ENCODE measurements at regions of chr5 and their contacts with region 1.

Region 1: DNA sequence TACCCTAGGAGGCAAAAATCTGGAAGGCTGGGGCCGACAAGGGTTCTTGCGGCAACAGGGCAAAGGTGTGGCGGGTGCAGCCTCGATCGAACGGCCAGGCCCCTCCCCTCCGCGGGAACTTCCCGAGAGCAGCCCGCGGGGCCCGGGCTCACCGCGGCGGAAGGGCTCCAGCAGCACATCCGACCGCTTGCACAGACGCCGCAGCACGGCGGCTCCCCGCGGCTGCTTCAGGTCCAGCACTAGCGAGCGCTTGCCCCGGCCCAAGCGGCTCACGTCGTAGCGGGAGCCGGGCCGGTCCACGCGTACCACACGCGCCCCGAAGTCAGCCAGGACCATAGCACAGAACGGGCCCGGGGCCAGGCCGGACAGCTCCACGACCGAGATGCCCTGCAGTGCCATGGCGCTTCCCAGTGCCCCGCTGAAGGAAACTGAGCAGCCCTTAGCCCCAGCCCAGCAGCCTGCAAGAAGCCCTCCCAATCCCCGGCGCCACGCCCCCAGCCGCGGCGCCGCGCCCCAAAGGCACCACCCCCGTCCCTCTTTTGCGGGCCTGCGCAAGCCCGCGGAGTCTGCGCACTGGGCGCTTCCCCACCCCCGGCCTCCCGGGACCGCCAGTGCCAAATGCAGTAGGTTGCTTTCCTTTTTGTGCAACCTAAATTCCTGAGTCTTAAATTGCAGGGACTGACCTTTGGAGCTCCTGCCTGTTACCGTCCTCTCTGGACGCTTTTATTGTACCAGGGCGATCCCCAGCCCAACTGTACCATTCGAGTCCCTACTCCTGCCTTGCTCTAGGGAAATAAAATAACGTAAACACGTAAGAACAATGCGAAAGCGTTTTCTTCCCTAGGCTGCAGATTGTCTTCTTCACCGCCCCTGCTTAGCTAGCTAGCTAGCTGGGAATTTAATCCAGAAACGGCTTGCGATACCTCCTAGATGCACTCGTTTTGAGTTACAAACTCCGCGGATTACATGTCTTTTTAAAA is at the start of gene AMACR:
- DNase-seq: peak; percentile 87 to 93
- ATAC-seq: peak; percentile 96 to 97
- H3K4me3 ChIP-seq: peak within 1 kb of the TSS; percentile 58 to 82 (median 67)
- H3K27ac ChIP-seq: peak within 1 kb of the TSS; percentile 83 to 95 (median 87)
- H3K4me1 ChIP-seq: peaks cover 6 to 14% of the 10 kb centered on the region in 2 donors
- H3K27me3 ChIP-seq: no peaks in the 10 kb centered on the region
- CTCF ChIP-seq: peak in 2 of 5 experiments; percentile 10 to 16
- POLR2A ChIP-seq: peak; percentile 58 to 84
- total RNA-seq, gene AMACR: 2.5 to 15.3 (median 3.1) TPM

Region 2: GRCh38 chr5:33901156-33901555 is 106.8 kb before region 1 on chr5:
- in situ Hi-C with region 1: no loop called
- intact Hi-C with region 1: no loop called
- DNase-seq: no peak
- ATAC-seq: no peak
- H3K4me3 ChIP-seq: no peak overlapping the region
- H3K27ac ChIP-seq: no peak overlapping the region
- H3K4me1 ChIP-seq: no peaks in the 10 kb centered on the region
- H3K27me3 ChIP-seq: no peaks in the 10 kb centered on the region
- CTCF ChIP-seq: no peak
- POLR2A ChIP-seq: no peak

Region 3: GRCh38 chr5:34474573-34475021 is 466.7 kb after region 1 on chr5:
- in situ Hi-C with region 1: loop called in 1 of 4 experiments (anchors 25 kb)
- intact Hi-C with region 1: no loop called
- DNase-seq: no peak
- ATAC-seq: peak; percentile 60 to 62
- H3K4me3 ChIP-seq: no peak overlapping the region
- H3K27ac ChIP-seq: no peak overlapping the region
- H3K4me1 ChIP-seq: no peaks in the 10 kb centered on the region
- H3K27me3 ChIP-seq: no peaks in the 10 kb centered on the region
- CTCF ChIP-seq: peak; percentile 54 to 96 (median 75)
- POLR2A ChIP-seq: no peak

Region 4: GRCh38 chr5:34811706-34812105 is 803.8 kb after region 1 on chr5:
- in situ Hi-C with region 1: no loop called
- intact Hi-C with region 1: no loop called
- DNase-seq: no peak
- ATAC-seq: no peak
- H3K4me3 ChIP-seq: no peak overlapping the region
- H3K27ac ChIP-seq: no peak overlapping the region
- H3K4me1 ChIP-seq: no peaks in the 10 kb centered on the region
- H3K27me3 ChIP-seq: no peaks in the 10 kb centered on the region
- CTCF ChIP-seq: no peak
- POLR2A ChIP-seq: no peak

Region 5: DNA sequence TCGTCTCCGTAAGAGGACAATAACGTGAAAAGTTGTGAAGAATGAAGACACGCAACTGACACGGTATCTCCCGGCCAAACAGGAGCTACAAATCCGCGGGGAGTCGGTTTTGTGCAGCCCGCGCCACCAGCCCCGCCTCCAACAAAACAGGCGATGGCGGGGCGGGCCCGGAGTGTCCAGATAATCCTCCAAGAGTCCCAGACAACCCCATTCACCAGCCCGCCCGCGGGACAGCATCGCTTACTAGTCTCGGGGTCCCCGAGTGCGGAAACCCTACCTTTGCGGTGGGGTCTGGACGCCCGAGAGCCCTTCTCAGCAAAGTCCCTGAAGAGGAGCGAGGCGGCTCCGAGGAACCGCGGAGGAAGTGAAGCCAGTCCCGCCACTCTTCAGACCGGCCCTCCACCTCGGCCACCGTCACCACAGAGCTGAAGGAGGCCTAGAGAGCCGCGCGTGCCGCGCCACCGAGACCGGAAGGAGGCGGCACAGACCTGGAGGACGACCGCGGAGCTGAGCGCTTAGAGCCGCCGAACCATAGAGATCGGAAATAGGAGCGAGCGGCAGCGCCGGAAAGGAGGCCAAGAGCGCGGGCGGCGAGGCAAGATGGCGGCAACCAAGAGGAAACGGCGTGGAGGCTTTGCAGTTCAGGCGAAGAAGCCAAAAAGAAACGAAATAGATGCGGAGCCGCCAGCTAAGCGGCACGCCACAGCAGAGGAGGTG is 907.4 kb after region 1 on chr5 and contains the starts of genes BRIX1 and RAD1:
- in situ Hi-C with region 1: loop called in 2 of 4 experiments (anchors 25 kb)
- intact Hi-C with region 1: loop called (anchors 5 kb)
- DNase-seq: peak; percentile 93 to 95
- ATAC-seq: peak; percentile 98 to 99
- H3K4me3 ChIP-seq: peak within 1 kb of the TSS; percentile 74 to 96 (median 88)
- H3K27ac ChIP-seq: peak within 1 kb of the TSS; percentile 78 to 92 (median 84)
- H3K4me1 ChIP-seq: peaks cover 20 to 23% of the 10 kb centered on the region in 2 donors
- H3K27me3 ChIP-seq: no peaks in the 10 kb centered on the region
- CTCF ChIP-seq: peak in 1 of 5 experiments; percentile 38
- POLR2A ChIP-seq: peak; percentile 44 to 53
- total RNA-seq, gene BRIX1: 9.2 to 15.7 (median 12.0) TPM
- total RNA-seq, gene RAD1: 7.8 to 21.2 (median 18.1) TPM